ENCODE measurements at regions of chr3 and their contacts with region 1.

Region 1: GRCh38 chr3:191220908-191221307 is 21.9 kb downstream of the OSTN start:
- DNase-seq: peak; percentile 3
- ATAC-seq: peak; percentile 56
- H3K4me3 ChIP-seq: no peak overlapping the region
- H3K27ac ChIP-seq: no peak overlapping the region
- H3K4me1 ChIP-seq: no peaks in the 10 kb centered on the region
- H3K27me3 ChIP-seq: no peaks in the 10 kb centered on the region
- CTCF ChIP-seq: peak; percentile 52
- EP300 ChIP-seq: no peak
- POLR2A ChIP-seq: no peak
- RAD21 ChIP-seq: no peak

Region 2: DNA sequence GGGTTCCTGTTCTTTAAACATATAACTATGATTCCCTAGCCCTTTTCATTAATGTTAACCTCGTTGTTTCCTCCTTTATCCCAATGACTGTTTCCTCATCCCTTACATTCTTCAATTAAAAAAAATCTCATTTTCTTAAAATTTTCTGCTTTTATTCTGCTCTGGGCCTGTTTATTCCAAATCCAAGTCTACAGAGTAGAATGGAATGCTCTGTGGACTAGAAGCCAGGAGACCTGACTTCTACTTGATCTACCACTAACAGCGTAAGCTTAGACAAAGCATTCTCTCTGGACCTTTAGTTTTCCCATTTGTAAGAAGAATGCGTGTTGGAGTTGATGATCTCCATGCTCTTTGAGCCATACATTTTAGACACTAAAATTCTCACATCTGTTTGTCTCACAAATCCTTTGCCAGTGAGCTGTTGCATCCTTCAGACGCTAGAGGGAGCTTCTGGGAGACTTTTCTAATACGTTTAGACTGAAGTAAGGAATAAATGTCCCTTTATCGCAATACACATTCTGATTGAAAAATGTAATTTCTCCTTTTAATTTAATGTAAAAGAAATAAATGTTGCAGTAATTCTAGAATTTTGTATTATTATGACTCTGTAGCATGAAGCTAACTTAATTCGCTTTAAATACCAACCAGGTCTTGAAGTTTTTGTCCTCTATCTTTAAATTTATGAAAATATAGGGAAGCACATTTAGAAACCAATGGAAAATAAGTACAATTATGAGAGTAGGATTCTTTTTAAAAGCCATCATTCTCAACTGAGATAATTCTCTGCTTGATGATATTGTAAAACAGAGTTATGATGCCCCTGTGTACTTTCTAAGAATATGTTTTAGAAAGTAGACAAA is 336.7 kb before region 1 on chr3:
- CTCF ChIA-PET with region 1: no interaction called
- POLR2A ChIA-PET with region 1: no interaction called
- in situ Hi-C with region 1: no loop called
- intact Hi-C with region 1: loop called (anchors 10 kb)
- DNase-seq: peak; percentile 53
- ATAC-seq: peak; percentile 68
- H3K4me3 ChIP-seq: no peak overlapping the region
- H3K27ac ChIP-seq: no peak overlapping the region
- H3K4me1 ChIP-seq: no peaks in the 10 kb centered on the region
- H3K27me3 ChIP-seq: no peaks in the 10 kb centered on the region
- CTCF ChIP-seq: peak; percentile 76
- EP300 ChIP-seq: no peak
- POLR2A ChIP-seq: no peak
- RAD21 ChIP-seq: no peak

Region 3: GRCh38 chr3:190968616-190969015 is 252.3 kb before region 1 on chr3:
- CTCF ChIA-PET with region 1: no interaction called
- POLR2A ChIA-PET with region 1: no interaction called
- in situ Hi-C with region 1: no loop called
- intact Hi-C with region 1: no loop called
- DNase-seq: no peak
- ATAC-seq: no peak
- H3K4me3 ChIP-seq: no peak overlapping the region
- H3K27ac ChIP-seq: no peak overlapping the region
- H3K4me1 ChIP-seq: no peaks in the 10 kb centered on the region
- H3K27me3 ChIP-seq: no peaks in the 10 kb centered on the region
- CTCF ChIP-seq: no peak
- EP300 ChIP-seq: no peak
- POLR2A ChIP-seq: no peak
- RAD21 ChIP-seq: no peak

Region 4: DNA sequence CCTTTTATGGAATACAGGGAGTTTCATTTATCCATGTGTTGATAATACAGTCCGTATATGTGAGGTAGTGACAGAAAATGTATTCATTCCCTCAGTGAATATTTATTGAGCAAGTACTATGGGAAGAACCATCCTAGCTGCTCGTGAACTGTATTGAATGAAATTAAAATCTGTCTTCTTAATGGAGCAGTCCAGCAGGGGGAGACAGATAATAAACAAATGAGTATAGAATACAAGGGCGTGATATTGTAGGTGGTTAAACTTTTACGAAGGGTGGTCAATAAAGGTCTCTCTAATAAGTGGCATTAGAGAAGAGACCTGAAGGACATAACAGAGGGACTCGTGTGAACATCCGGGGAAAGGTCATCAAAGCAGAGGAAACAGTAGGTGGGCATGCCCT is 84.6 kb before region 1 on chr3:
- CTCF ChIA-PET with region 1: no interaction called
- POLR2A ChIA-PET with region 1: no interaction called
- in situ Hi-C with region 1: no loop called
- intact Hi-C with region 1: loop called (anchors 1 kb)
- DNase-seq: peak; percentile 18
- ATAC-seq: peak; percentile 71
- H3K4me3 ChIP-seq: no peak overlapping the region
- H3K27ac ChIP-seq: no peak overlapping the region
- H3K4me1 ChIP-seq: peaks cover 4% of the 10 kb centered on the region
- H3K27me3 ChIP-seq: no peaks in the 10 kb centered on the region; a peak in 1 of 5 replicates
- CTCF ChIP-seq: peak; percentile 54
- EP300 ChIP-seq: no peak
- POLR2A ChIP-seq: no peak
- RAD21 ChIP-seq: no peak

Region 5: GRCh38 chr3:191176038-191176785 is 44.7 kb before region 1 on chr3:
- CTCF ChIA-PET with region 1: no interaction called
- POLR2A ChIA-PET with region 1: no interaction called
- in situ Hi-C with region 1: no loop called
- intact Hi-C with region 1: no loop called
- DNase-seq: no peak
- ATAC-seq: no peak
- H3K4me3 ChIP-seq: no peak overlapping the region
- H3K27ac ChIP-seq: no peak overlapping the region
- H3K4me1 ChIP-seq: no peaks in the 10 kb centered on the region
- H3K27me3 ChIP-seq: no peaks in the 10 kb centered on the region
- CTCF ChIP-seq: no peak
- EP300 ChIP-seq: no peak
- POLR2A ChIP-seq: no peak
- RAD21 ChIP-seq: no peak